ENCODE measurements at regions of chr3 and their contacts with region 1.

Region 1: GRCh38 chr3:123505820-123506219 is 56.9 kb upstream of the ADCY5 start:
- DNase-seq: no peak
- ATAC-seq: no peak

Region 2: DNA sequence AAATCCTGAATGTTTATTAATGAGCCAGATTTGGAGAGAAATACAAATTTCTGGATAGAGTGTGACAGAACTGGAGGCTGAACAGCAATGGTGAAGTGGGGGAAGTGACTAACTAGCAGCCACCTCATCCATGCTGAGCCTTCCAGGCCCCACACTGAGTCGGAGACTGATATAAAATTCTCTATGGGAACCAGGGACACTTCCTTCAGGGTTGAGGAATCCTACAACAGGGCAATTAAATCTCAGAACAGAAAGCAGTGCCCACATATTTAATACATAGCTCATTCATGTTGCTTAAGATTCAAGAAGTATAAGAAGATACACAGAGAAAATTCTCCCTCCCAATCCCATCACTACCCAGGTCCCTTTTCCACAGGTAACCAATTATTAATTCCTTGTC is 29.8 kb after region 1 on chr3:
- intact Hi-C with region 1: loop called (anchors 1 kb)
- DNase-seq: no peak
- ATAC-seq: no peak

Region 3: DNA sequence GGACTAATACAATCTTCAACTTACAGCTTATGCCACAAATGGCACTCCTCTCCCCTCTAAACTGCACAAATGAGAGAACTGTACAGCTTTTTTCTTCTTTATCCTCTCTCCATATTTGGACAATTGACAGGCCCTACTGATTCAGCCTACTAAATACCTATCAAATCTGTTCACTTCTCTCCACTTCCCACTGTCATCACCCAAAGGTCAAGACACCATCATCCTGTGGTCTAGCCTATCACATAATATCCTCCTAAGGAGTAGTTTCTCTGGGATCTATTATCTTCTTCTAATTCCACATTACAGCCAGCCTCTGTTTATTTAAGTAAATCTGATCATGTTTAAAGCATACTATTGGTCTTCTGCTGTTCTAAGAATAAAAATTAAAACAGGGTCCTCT is 1739.7 kb after region 1 on chr3:
- intact Hi-C with region 1: no loop called
- DNase-seq: no peak
- ATAC-seq: no peak